GM12878 (cell line): ENCODE measurements at regions of chr9 and their contacts with region 1.

Region 1: GRCh38 chr9:109972026-109972882 is 192.3 kb downstream of the PALM2AKAP2 start:
- DNase-seq: peak; percentile 91
- ATAC-seq: peak; percentile 44
- H3K4me3 ChIP-seq: no peak overlapping the region
- H3K27ac ChIP-seq: peak overlapping the region; percentile 92
- H3K4me1 ChIP-seq: peaks cover 87% of the 10 kb centered on the region
- H3K27me3 ChIP-seq: no peaks in the 10 kb centered on the region
- CTCF ChIP-seq: peak; percentile 22 to 53 (median 42); a peak in 5 of 6 replicates
- EP300 ChIP-seq: no peak
- POLR2A ChIP-seq: peak; percentile 42
- RAD21 ChIP-seq: peak; percentile 41; the same call in 1 of the 2 replicates

Region 2: DNA sequence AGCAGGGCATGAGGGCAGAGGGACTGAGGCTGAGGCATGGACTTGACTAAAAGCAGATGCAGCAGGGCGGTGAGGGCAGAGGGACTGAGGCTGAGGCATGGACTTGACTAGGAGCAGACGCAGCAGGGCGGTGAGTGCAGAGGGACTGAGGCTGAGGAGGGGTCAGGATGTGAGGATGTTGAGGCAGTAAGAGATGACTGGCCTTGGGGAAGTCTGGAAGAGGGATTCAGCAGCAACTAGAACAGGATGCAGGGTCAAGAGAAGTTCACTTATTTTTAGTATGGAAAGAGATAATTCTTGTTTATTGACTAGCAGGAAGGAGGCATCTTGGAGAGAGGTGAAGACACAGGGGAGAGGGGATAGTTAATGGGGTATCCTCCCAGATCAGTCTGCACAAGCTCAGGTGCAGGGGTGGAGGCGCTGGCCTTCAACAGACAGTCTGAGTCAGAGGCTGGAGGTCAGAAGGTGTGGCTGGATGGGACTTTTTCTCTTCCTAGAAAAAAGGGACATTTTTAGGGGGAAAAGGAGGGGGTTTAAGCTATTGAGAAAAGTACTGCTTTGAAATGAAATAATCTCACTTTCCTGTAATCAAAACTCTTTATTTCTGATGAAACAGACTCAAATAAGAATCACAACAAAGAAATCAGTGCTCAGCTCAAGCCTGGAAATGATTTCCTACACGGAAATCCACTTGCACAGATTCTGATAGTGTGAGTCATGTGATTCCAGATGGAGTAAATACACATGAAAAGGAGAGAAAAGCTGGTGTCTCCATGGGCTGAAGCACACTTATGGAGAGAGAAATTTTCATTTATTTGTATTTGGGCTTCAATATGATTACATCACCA is 61.4 kb before region 1 on chr9:
- CTCF ChIA-PET with region 1: interaction called, 102 read pairs
- POLR2A ChIA-PET with region 1: interaction called, 52 read pairs
- RAD21 ChIA-PET with region 1: interaction called, 133 read pairs
- SMC1A ChIA-PET with region 1: interaction called, 423 read pairs
- in situ Hi-C with region 1: loop called (anchors 5 kb)
- intact Hi-C with region 1: loop called (anchors 1 kb)
- DNase-seq: no peak
- ATAC-seq: no peak
- H3K4me3 ChIP-seq: no peak overlapping the region
- H3K27ac ChIP-seq: no peak overlapping the region
- H3K4me1 ChIP-seq: peaks cover 66% of the 10 kb centered on the region
- H3K27me3 ChIP-seq: no peaks in the 10 kb centered on the region
- CTCF ChIP-seq: no peak
- EP300 ChIP-seq: no peak
- POLR2A ChIP-seq: no peak
- RAD21 ChIP-seq: no peak

Region 3: GRCh38 chr9:109934857-109935215 is 37.4 kb before region 1 on chr9:
- CTCF ChIA-PET with region 1: interaction called, 4 read pairs
- POLR2A ChIA-PET with region 1: interaction called, 6 read pairs
- RAD21 ChIA-PET with region 1: interaction called, 22 read pairs
- SMC1A ChIA-PET with region 1: interaction called, 8 read pairs
- in situ Hi-C with region 1: no loop called
- intact Hi-C with region 1: no loop called
- DNase-seq: no peak
- ATAC-seq: no peak
- H3K4me3 ChIP-seq: no peak overlapping the region
- H3K27ac ChIP-seq: peak overlapping the region; percentile 17; the same call in 1 of the 2 replicates
- H3K4me1 ChIP-seq: peaks cover 23% of the 10 kb centered on the region
- H3K27me3 ChIP-seq: no peaks in the 10 kb centered on the region
- CTCF ChIP-seq: no peak
- EP300 ChIP-seq: no peak
- POLR2A ChIP-seq: no peak
- RAD21 ChIP-seq: no peak

Region 4: GRCh38 chr9:110007477-110008270 is 35.4 kb after region 1 on chr9:
- CTCF ChIA-PET with region 1: no interaction called
- POLR2A ChIA-PET with region 1: no interaction called
- RAD21 ChIA-PET with region 1: no interaction called
- SMC1A ChIA-PET with region 1: interaction called, 4 read pairs
- in situ Hi-C with region 1: no loop called
- intact Hi-C with region 1: loop called (anchors 1 kb)
- DNase-seq: peak; percentile 59
- ATAC-seq: peak; percentile 86
- H3K4me3 ChIP-seq: no peak overlapping the region
- H3K27ac ChIP-seq: peak overlapping the region; percentile 69
- H3K4me1 ChIP-seq: peaks cover 21% of the 10 kb centered on the region
- H3K27me3 ChIP-seq: no peaks in the 10 kb centered on the region
- CTCF ChIP-seq: no peak
- EP300 ChIP-seq: no peak
- POLR2A ChIP-seq: no peak
- RAD21 ChIP-seq: peak; percentile 34; the same call in 1 of the 2 replicates

Region 5: GRCh38 chr9:110058304-110058953 is 86.2 kb after region 1 on chr9:
- CTCF ChIA-PET with region 1: interaction called, 45 read pairs
- POLR2A ChIA-PET with region 1: interaction called, 3 read pairs
- RAD21 ChIA-PET with region 1: interaction called, 137 read pairs
- SMC1A ChIA-PET with region 1: interaction called, 63 read pairs
- in situ Hi-C with region 1: loop called (anchors 5 kb)
- intact Hi-C with region 1: no loop called
- DNase-seq: no peak
- ATAC-seq: peak; percentile 83
- H3K4me3 ChIP-seq: peak overlapping the region; percentile 30; the same call in 1 of the 2 replicates
- H3K27ac ChIP-seq: no peak overlapping the region; the same call in 1 of the 2 replicates
- H3K4me1 ChIP-seq: peaks cover 19% of the 10 kb centered on the region
- H3K27me3 ChIP-seq: no peaks in the 10 kb centered on the region
- CTCF ChIP-seq: peak; percentile 63 to 74 (median 72)
- EP300 ChIP-seq: no peak
- POLR2A ChIP-seq: no peak
- RAD21 ChIP-seq: peak; percentile 98

Region 6: GRCh38 chr9:110143950-110144545 is 171.8 kb after region 1 on chr9:
- CTCF ChIA-PET with region 1: interaction called, 60 read pairs
- POLR2A ChIA-PET with region 1: interaction called, 24 read pairs
- RAD21 ChIA-PET with region 1: interaction called, 92 read pairs
- SMC1A ChIA-PET with region 1: interaction called, 254 read pairs
- in situ Hi-C with region 1: no loop called
- intact Hi-C with region 1: no loop called
- DNase-seq: no peak
- ATAC-seq: peak; percentile 79
- H3K4me3 ChIP-seq: peak overlapping the region; percentile 37; the same call in 1 of the 2 replicates
- H3K27ac ChIP-seq: peak overlapping the region; percentile 81
- H3K4me1 ChIP-seq: peaks cover 61% of the 10 kb centered on the region
- H3K27me3 ChIP-seq: no peaks in the 10 kb centered on the region
- CTCF ChIP-seq: peak in 2 of 3 experiments; percentile 16 to 21; a peak in 1 of 6 replicates
- EP300 ChIP-seq: no peak
- POLR2A ChIP-seq: peak; percentile 48; the same call in 1 of the 2 replicates
- RAD21 ChIP-seq: no peak